Heart right ventricle (tissue), 16 donors: ENCODE measurements at regions of chr12 and their contacts with region 1.

Region 1: GRCh38 chr12:11581179-11581755 is 68.2 kb upstream of the ETV6 start:
- DNase-seq: peak in 1 of 2 donors; percentile 76
- ATAC-seq: peak in 2 of 8 donors; percentile 37
- H3K4me3 ChIP-seq: no peak overlapping the region
- H3K27ac ChIP-seq: no peak overlapping the region
- H3K4me1 ChIP-seq: peaks cover 0 to 26% (median 0%) of the 10 kb centered on the region in 9 donors
- H3K27me3 ChIP-seq: peaks cover 0 to 8% (median 0%) of the 10 kb centered on the region in 7 donors
- CTCF ChIP-seq: peak; percentile 63 to 80 (median 69)

Region 2: GRCh38 chr12:11730299-11731041 is 149.2 kb after region 1 on chr12:
- intact Hi-C with region 1: loop called in 1 of 10 experiments (anchors 10 kb)
- DNase-seq: no peak
- ATAC-seq: no peak
- H3K4me3 ChIP-seq: no peak overlapping the region
- H3K27ac ChIP-seq: peak overlapping the region in 1 of 10 donors; percentile 65
- H3K4me1 ChIP-seq: peaks cover 0 to 65% (median 21%) of the 10 kb centered on the region in 9 donors
- H3K27me3 ChIP-seq: no peaks in the 10 kb centered on the region
- CTCF ChIP-seq: no peak

Region 3: GRCh38 chr12:11812586-11813427 is 231.5 kb after region 1 on chr12:
- intact Hi-C with region 1: no loop called
- DNase-seq: peak; percentile 39 to 53
- ATAC-seq: peak; percentile 50 to 84 (median 78)
- H3K4me3 ChIP-seq: peak overlapping the region in 7 of 10 donors; percentile 21 to 40 (median 34)
- H3K27ac ChIP-seq: peak overlapping the region; percentile 62 to 91 (median 78)
- H3K4me1 ChIP-seq: peaks cover 24 to 71% (median 52%) of the 10 kb centered on the region in 9 donors
- H3K27me3 ChIP-seq: no peaks in the 10 kb centered on the region
- CTCF ChIP-seq: peak in 6 of 9 donors; percentile 13 to 34 (median 30)

Region 4: GRCh38 chr12:11891754-11892386 is 310.6 kb after region 1 on chr12:
- intact Hi-C with region 1: loop called in 5 of 10 experiments (anchors 5 to 10 kb)
- DNase-seq: peak in 1 of 2 donors; percentile 57
- ATAC-seq: peak; percentile 75 to 92 (median 88)
- H3K4me3 ChIP-seq: no peak overlapping the region
- H3K27ac ChIP-seq: peak overlapping the region in 6 of 10 donors; percentile 12 to 66 (median 30)
- H3K4me1 ChIP-seq: peaks cover 0 to 31% (median 11%) of the 10 kb centered on the region in 9 donors
- H3K27me3 ChIP-seq: no peaks in the 10 kb centered on the region
- CTCF ChIP-seq: peak in 8 of 9 donors; percentile 17 to 58 (median 44)

Region 5: GRCh38 chr12:12017798-12018197 is 436.5 kb after region 1 on chr12:
- intact Hi-C with region 1: loop called in 2 of 10 experiments (anchors 5 kb)
- DNase-seq: no peak
- ATAC-seq: peak; percentile 48 to 73 (median 60)
- H3K4me3 ChIP-seq: no peak overlapping the region
- H3K27ac ChIP-seq: no peak overlapping the region
- H3K4me1 ChIP-seq: peaks cover 0 to 32% (median 6%) of the 10 kb centered on the region in 9 donors
- H3K27me3 ChIP-seq: no peaks in the 10 kb centered on the region
- CTCF ChIP-seq: peak in 8 of 9 donors; percentile 8 to 58 (median 42)

Region 6: DNA sequence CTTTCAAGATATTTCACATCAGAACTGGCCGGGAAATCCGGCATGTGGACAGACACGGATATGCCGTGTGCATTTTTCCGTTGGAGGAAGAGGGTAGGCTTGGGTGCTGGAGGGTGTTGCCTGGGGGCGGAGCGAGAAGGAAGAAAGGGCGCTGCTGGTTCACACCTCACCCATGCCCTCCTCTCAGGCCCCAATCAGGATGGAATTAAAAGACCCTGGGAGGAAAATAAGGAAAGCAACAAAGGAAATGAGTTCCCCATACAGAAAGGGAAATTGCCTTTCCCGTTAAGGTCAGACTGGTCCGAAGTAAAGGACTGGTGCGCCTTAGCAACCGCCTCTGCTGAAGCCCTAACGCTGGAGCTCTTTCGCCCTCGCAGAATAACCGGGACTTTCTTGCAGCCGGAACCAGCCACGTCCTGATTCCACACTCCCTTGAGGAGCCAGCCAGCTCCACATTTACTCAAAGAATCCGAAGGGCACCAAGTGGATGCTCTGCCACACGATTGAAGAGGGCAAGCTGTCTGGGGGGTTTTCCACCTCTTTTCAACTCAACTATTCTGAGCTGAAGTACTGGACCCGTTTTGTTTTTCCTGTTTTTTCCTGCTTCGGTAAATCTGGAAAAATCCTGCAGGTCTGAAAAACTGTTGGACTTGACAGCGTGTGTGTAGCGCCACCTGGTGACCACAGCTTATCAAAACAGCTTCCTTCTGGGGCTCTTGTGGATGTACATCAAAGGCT is 451.8 kb after region 1 on chr12:
- intact Hi-C with region 1: loop called (anchors 1 to 5 kb)
- DNase-seq: peak; percentile 31 to 82
- ATAC-seq: peak; percentile 75 to 91 (median 86)
- H3K4me3 ChIP-seq: peak overlapping the region; percentile 5 to 57 (median 48)
- H3K27ac ChIP-seq: peak overlapping the region in 9 of 10 donors; percentile 5 to 86 (median 77)
- H3K4me1 ChIP-seq: peaks cover 0 to 19% (median 9%) of the 10 kb centered on the region in 9 donors
- H3K27me3 ChIP-seq: peaks cover 0 to under 1% (median 0%) of the 10 kb centered on the region in 7 donors
- CTCF ChIP-seq: peak; percentile 67 to 95 (median 89)

Region 7: GRCh38 chr12:12327802-12328201 is 746.5 kb after region 1 on chr12:
- intact Hi-C with region 1: loop called in 2 of 10 experiments (anchors 5 to 10 kb)
- DNase-seq: peak in 1 of 2 donors; percentile 34
- ATAC-seq: peak in 6 of 8 donors; percentile 46 to 64 (median 53)
- H3K4me3 ChIP-seq: no peak overlapping the region
- H3K27ac ChIP-seq: peak overlapping the region in 4 of 10 donors; percentile 40 to 49 (median 48)
- H3K4me1 ChIP-seq: peaks cover 0 to 16% (median 5%) of the 10 kb centered on the region in 9 donors
- H3K27me3 ChIP-seq: no peaks in the 10 kb centered on the region
- CTCF ChIP-seq: peak; percentile 50 to 81 (median 73)

Region 8: GRCh38 chr12:12334367-12335040 is 753.2 kb after region 1 on chr12:
- intact Hi-C with region 1: loop called in 2 of 10 experiments (anchors 5 to 10 kb)
- DNase-seq: peak; percentile 32 to 51
- ATAC-seq: peak; percentile 21 to 65 (median 54)
- H3K4me3 ChIP-seq: no peak overlapping the region
- H3K27ac ChIP-seq: no peak overlapping the region
- H3K4me1 ChIP-seq: peaks cover 0 to 33% (median 19%) of the 10 kb centered on the region in 9 donors
- H3K27me3 ChIP-seq: no peaks in the 10 kb centered on the region
- CTCF ChIP-seq: peak; percentile 80 to 90 (median 86)